ENCODE measurements at regions of chr12 and their contacts with region 1.

Region 1: DNA sequence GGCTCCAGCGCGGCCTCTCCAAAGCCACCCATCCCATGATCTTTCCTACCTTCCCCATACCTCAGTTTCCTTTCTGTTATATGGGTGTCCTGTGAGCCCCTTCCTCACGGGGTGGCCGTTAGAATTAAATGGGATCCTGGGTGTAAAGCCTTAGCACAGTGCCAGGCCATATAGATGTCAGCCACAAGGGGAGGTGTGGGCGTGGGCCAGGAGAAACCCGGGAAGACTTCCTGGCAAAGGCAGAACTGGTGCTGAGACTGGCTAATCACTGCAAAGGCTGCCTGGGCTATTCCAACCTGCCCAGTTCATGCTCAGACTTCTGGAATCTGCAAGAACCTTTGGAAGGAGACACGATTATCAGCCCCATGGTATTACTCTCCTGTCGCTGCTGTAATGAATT is 11.0 kb upstream of the NCOR2 start:
- DNase-seq: no peak
- ATAC-seq: no peak
- H3K4me3 ChIP-seq: no peak overlapping the region
- H3K27ac ChIP-seq: no peak overlapping the region
- H3K4me1 ChIP-seq: no peaks in the 10 kb centered on the region
- H3K27me3 ChIP-seq: no peaks in the 10 kb centered on the region
- CTCF ChIP-seq: no peak

Region 2: DNA sequence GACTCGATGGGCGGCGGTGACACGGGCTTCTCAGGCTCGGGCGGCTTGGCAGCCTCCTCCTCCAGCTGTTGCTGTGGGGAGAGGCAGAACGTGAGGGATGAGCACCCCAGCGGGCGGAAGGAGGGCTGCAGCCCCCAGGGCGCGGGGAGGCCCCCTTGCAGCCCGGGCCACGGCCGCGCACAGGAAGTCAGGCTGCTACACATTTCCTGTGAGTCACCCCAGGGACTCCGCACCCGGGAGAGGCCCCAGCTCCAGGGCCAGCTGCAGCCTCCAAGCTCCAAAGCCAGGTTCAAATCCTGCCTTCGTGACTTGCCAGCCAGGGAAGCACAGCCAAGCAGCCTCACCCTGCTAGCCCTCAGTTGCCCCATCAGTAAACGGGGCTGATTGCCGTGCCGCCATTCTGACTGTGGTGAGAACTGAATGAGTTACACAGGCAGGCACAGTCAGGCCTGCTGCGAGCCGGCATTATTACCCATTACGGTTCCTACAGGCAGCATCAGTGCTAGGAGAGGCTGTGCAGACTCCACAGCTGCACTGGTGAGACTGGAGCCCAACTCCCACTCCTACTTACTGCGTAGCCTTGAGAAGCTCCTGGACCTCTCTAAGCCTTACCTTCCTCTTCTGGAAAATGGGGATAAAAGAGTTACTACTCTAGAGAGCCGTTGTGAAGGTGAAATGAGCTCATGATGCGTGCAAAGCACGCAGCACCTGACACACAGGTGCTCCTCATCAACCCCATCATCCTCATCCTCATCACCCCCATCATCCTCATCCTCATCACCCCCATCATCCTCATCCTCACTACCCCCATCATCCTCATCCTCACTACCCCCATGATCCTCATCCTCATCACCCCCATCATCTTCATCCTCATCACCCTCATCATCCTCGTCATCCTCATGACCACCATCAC is 112.0 kb before region 1 on chr12:
- intact Hi-C with region 1: no loop called
- DNase-seq: peak; percentile 75 to 86
- ATAC-seq: peak; percentile 33 to 81 (median 62)
- H3K4me3 ChIP-seq: no peak overlapping the region
- H3K27ac ChIP-seq: peak overlapping the region; percentile 58
- H3K4me1 ChIP-seq: peaks cover 8% of the 10 kb centered on the region
- H3K27me3 ChIP-seq: no peaks in the 10 kb centered on the region
- CTCF ChIP-seq: no peak

Region 3: GRCh38 chr12:124620751-124621660 is 42.6 kb after region 1 on chr12:
- intact Hi-C with region 1: no loop called
- DNase-seq: peak; percentile 84 to 88
- ATAC-seq: peak; percentile 89 to 95 (median 92)
- H3K4me3 ChIP-seq: peak overlapping the region; percentile 8
- H3K27ac ChIP-seq: peak overlapping the region; percentile 56
- H3K4me1 ChIP-seq: peaks cover 17% of the 10 kb centered on the region
- H3K27me3 ChIP-seq: no peaks in the 10 kb centered on the region
- CTCF ChIP-seq: no peak

Region 4: DNA sequence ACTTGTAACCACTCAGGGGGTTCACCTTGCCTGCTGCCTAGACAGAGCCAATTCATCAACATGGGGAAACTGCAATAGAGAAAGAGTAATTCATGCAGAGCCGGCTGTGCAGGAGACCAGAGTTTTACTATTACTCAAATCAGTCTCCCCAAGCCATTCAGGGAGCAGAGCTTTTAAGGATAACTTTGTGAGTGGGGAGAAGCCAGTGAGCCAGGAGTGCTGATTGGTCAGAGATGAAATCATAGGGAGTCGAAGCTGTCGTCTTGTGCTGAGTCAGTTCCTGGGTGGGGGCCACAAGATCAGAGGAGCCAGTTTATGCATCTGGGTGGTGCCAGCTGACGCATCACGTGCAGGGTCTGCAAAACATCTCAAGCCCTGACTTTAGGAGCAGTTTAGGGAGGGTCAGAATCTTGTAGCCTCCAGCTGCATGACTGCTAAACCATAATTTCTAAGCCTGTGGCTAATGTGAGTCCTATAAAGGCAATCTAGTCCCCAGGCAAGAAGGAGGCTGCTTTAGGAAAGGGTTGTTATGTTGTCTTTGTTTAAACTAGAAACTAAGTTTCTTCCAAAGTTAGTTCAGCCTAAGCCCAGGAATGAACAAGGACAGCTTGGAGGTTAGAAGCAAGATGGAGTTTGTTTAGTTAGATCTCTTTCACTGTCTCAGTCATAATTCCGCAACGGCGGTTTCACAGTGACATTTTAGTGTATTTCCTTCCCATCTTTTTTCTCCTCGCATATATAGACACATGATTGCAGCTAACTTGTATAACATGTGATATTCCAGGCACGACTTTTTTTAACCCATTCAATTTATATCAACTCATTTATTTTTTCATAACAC is 57.9 kb after region 1 on chr12:
- intact Hi-C with region 1: loop called in 1 of 2 experiments (anchors 5 kb)
- DNase-seq: peak; percentile 66 to 78
- ATAC-seq: peak in 3 of 4 donors; percentile 21 to 50 (median 33)
- H3K4me3 ChIP-seq: no peak overlapping the region
- H3K27ac ChIP-seq: no peak overlapping the region
- H3K4me1 ChIP-seq: peaks cover 22% of the 10 kb centered on the region
- H3K27me3 ChIP-seq: no peaks in the 10 kb centered on the region
- CTCF ChIP-seq: no peak

Region 5: DNA sequence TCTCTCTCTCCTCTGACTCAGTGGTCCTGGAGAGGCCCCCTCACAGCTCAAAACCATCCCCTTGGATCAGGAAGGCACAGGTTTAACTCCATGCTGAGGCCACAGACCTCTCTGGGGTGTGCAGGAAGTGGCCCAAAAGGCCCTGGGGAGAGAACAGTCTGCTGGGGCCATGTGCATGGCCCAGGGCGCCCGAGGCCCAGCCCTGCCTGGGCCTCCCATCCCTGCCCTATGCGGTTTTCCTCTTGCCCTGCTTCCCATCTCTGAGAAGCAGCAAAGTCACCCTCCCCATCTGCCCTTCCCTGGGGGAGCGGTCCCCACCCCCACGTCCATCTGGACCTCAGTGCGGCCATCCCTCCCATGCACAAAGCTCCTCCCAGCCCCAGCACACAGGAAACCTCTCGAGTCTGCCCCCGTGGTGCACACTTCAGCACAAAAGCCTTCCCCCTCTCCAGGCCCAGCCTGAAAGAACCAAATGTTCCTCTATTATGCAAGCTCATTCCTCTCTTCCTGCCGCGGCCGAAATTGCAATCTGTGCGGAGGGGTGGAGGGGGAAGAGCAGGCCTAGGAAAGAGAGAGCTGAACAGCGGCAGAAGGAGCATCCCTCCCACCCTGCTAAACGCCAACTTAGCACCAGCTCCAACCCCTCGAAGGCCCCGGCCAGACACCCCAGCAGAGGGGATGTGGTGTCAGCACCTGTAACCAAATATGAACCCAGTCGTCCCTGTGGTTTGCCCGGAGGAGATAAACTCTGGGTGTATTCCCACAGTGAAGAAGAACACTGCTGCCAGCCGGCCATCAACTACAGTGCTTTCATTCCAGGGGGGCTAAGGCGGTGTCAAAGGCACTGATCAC is 176.7 kb after region 1 on chr12:
- intact Hi-C with region 1: loop called in 1 of 2 experiments (anchors 5 kb)
- DNase-seq: peak; percentile 84 to 92
- ATAC-seq: peak; percentile 78 to 91 (median 88)
- H3K4me3 ChIP-seq: no peak overlapping the region
- H3K27ac ChIP-seq: peak overlapping the region; percentile 77
- H3K4me1 ChIP-seq: peaks cover 32% of the 10 kb centered on the region
- H3K27me3 ChIP-seq: no peaks in the 10 kb centered on the region
- CTCF ChIP-seq: no peak

Measured in psoas muscle (tissue), 8 donors.